ENCODE measurements at regions of chr12 and their contacts with region 1.

Region 1: DNA sequence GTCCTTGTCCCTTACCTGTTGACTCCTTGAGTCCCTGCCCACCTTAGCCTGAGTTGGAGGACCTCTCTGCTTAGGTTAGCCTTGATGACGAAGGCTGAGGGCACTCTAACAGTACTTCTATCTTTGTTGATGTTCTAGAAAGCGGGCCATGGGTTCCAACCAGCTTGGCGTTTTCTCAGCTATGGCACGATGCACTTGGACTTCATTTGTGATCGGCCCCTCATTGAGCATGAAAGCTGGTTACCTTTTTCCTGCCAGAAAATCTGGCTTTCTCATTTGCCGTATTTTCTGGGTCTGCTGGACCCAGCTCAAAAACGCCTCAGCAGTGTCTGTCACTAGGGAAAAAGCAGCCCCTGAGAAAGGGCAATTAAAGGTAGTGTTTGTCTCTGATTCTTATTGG is 290.8 kb downstream of the EMP1 start:
- DNase-seq: no peak
- H3K4me3 ChIP-seq: no peak overlapping the region
- H3K27ac ChIP-seq: no peak overlapping the region
- H3K4me1 ChIP-seq: no peaks in the 10 kb centered on the region
- H3K27me3 ChIP-seq: no peaks in the 10 kb centered on the region
- CTCF ChIP-seq: no peak
- EP300 ChIP-seq: no peak
- POLR2A ChIP-seq: no peak

Region 2: DNA sequence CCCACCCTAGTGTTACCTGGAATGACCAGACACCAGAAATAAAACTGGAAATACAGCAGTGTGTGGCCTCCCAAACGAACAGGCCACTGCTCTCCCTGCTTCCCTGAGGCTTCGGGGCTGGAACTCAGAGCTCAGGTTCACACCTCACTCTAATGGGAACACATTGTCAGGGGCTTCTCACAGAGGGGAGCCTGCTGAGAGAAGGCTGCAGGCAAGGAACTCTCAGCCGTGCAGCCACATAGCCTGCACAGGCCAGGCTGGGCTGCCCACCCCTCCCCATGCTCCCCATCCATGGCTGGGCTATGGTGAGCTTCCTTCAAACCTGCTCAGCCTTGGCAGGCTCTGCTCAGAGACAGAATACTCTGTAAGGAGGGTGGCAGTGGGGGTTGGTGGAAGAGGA is 11.7 kb after region 1 on chr12:
- in situ Hi-C with region 1: no loop called
- intact Hi-C with region 1: loop called (anchors 1 kb)
- DNase-seq: no peak
- H3K4me3 ChIP-seq: no peak overlapping the region
- H3K27ac ChIP-seq: no peak overlapping the region
- H3K4me1 ChIP-seq: no peaks in the 10 kb centered on the region
- H3K27me3 ChIP-seq: no peaks in the 10 kb centered on the region
- CTCF ChIP-seq: no peak
- EP300 ChIP-seq: no peak
- POLR2A ChIP-seq: no peak

Region 3: DNA sequence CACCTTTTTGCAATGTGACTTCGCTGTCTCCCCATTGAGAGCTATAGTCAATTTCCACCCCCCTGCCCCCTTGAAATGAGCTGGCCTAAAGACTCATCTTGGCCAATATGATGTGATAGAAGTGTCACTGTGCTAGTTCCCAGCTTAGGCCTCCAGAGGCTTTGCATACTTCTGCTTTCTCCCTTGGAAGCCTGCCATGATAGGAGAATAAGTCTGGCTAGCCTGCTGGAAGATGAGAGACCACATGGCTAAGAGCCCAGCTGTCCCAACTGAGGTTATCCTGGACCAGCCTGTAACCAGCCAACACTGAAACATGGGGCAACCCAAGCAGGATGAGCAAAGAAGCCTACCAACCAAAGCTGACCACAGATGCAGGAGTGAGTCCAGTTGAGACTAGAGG is 297.2 kb after region 1 on chr12:
- in situ Hi-C with region 1: no loop called
- intact Hi-C with region 1: no loop called
- DNase-seq: no peak
- H3K4me3 ChIP-seq: no peak overlapping the region
- H3K27ac ChIP-seq: no peak overlapping the region
- H3K4me1 ChIP-seq: no peaks in the 10 kb centered on the region
- H3K27me3 ChIP-seq: no peaks in the 10 kb centered on the region
- CTCF ChIP-seq: no peak
- EP300 ChIP-seq: no peak
- POLR2A ChIP-seq: no peak

Measured in transverse colon (tissue), 4 donors.